Sciatic nerve (tissue), 2 donors: ENCODE measurements at regions of chr13 and their contacts with region 1.

Region 1: GRCh38 chr13:80204642-80205041 is 136.3 kb downstream of the SPRY2 start:
- DNase-seq: no peak
- ATAC-seq: no peak

Region 2: GRCh38 chr13:80342471-80343380 is 138.1 kb after region 1 on chr13:
- intact Hi-C with region 1: loop called (anchors 5 kb)
- DNase-seq: peak; percentile 92
- ATAC-seq: peak; percentile 52